SK-N-SH (cell line): ENCODE measurements at regions of chr17 and their contacts with region 1.

Region 1: DNA sequence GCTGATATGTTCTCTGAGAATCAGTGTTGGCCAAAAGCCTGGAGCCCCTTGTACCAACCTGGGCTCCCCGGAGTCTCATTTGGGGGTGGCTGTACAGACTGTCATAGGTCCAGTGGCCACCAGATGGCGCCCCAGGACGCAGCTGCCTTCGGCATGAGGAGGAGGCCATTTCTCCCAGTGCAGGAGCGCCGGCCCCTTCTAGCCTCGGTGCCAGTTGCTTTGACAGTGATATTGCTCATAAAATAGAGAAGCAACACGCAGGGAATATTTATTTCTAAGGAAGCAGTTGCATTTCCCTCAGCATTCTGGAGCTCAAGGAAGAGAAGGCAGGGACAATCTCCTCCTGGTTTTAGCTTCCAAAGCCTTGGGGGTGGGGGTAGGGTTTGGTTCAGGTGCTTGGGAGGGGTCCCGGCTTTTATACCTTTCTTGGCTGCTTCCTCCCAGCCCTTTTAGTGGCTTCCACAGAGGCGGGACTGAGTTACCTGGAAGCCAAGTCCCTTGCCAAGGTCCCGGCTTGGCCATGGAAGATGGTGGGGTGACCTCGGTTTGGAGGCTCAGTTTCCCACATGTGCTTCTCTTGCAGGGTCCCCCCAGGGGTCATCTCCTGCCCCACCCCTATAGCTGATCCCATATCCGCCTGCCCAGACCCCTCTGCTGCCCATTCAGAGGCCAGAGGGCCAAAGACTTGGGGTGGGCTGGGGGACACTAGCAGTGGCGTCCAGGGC is 117.8 kb upstream of the CDC42EP4 start:
- DNase-seq: peak; percentile 96
- H3K4me3 ChIP-seq: peak overlapping the region in 1 of 2 experiments; percentile 18; a peak in 1 of 4 replicates
- H3K27ac ChIP-seq: no peak overlapping the region
- H3K4me1 ChIP-seq: peaks cover 0 to 12% of the 10 kb centered on the region in 2 experiments; a peak in 1 of 4 replicates
- H3K27me3 ChIP-seq: no peaks in the 10 kb centered on the region
- CTCF ChIP-seq: peak; percentile 100
- EP300 ChIP-seq: peak in 1 of 2 experiments; percentile 24; a peak in 1 of 4 replicates
- RAD21 ChIP-seq: peak; percentile 100

Region 2: GRCh38 chr17:73068322-73069153 is 361.1 kb before region 1 on chr17:
- CTCF ChIA-PET with region 1: no interaction called
- POLR2A ChIA-PET with region 1: no interaction called
- DNase-seq: peak; percentile 59
- H3K4me3 ChIP-seq: no peak overlapping the region
- H3K27ac ChIP-seq: peak overlapping the region; percentile 83 to 86
- H3K4me1 ChIP-seq: peaks cover 17 to 35% of the 10 kb centered on the region in 2 experiments
- H3K27me3 ChIP-seq: no peaks in the 10 kb centered on the region
- CTCF ChIP-seq: no peak
- EP300 ChIP-seq: no peak
- RAD21 ChIP-seq: no peak

Region 3: DNA sequence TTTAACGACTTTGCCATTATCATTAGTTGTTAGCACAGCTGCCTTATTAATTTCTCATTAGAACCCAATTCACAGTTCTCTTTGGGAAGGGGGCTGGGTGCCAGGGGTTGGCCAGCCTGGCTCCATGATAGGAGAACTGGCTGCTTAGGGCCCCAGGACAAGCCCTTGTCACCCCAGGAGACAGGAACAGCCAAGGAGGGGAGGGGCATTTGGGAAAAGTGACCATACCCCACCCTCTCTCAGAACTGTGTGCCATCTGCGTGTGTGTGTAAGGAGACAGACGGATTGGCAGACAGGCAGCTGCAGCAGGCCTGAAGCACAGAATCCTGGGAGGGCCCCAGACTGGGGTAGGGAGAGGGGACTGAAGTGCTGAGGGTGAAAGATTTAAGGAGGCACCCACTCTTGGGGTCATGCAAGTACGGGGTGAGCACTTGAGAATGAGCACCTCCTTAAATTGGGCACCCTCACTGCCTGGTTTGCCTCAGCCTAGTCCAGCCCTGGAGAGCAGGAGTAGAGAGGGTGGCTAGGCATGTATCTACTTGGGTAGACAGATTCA is 36.2 kb after region 1 on chr17:
- CTCF ChIA-PET with region 1: interaction called, 14 read pairs
- POLR2A ChIA-PET with region 1: no interaction called
- DNase-seq: no peak
- H3K4me3 ChIP-seq: no peak overlapping the region
- H3K27ac ChIP-seq: no peak overlapping the region
- H3K4me1 ChIP-seq: peaks cover 0 to 10% of the 10 kb centered on the region in 2 experiments; a peak in 1 of 4 replicates
- H3K27me3 ChIP-seq: no peaks in the 10 kb centered on the region
- CTCF ChIP-seq: no peak
- EP300 ChIP-seq: no peak
- RAD21 ChIP-seq: no peak

Region 4: GRCh38 chr17:73541111-73541510 is 111.5 kb after region 1 on chr17:
- CTCF ChIA-PET with region 1: interaction called, 28 read pairs
- POLR2A ChIA-PET with region 1: no interaction called
- DNase-seq: no peak
- H3K4me3 ChIP-seq: no peak overlapping the region
- H3K27ac ChIP-seq: no peak overlapping the region
- H3K4me1 ChIP-seq: peaks cover 0 to 44% of the 10 kb centered on the region in 2 experiments; a peak in 1 of 4 replicates
- H3K27me3 ChIP-seq: no peaks in the 10 kb centered on the region
- CTCF ChIP-seq: no peak
- EP300 ChIP-seq: no peak
- RAD21 ChIP-seq: no peak

Region 5: GRCh38 chr17:73595479-73595878 is 165.9 kb after region 1 on chr17:
- CTCF ChIA-PET with region 1: interaction called, 83 read pairs
- POLR2A ChIA-PET with region 1: interaction called, 3 read pairs
- DNase-seq: peak; percentile 96
- H3K4me3 ChIP-seq: no peak overlapping the region
- H3K27ac ChIP-seq: no peak overlapping the region
- H3K4me1 ChIP-seq: peaks cover 0 to 36% of the 10 kb centered on the region in 2 experiments; a peak in 1 of 4 replicates
- H3K27me3 ChIP-seq: no peaks in the 10 kb centered on the region
- CTCF ChIP-seq: 0 out of 2 replicates have a peak, but pooled peaks have one; percentile 19
- EP300 ChIP-seq: peak in 1 of 2 experiments; percentile 81; a peak in 2 of 4 replicates
- RAD21 ChIP-seq: peak; percentile 82

Region 6: GRCh38 chr17:73710095-73710592 is 280.5 kb after region 1 on chr17:
- CTCF ChIA-PET with region 1: interaction called, 73 read pairs
- POLR2A ChIA-PET with region 1: no interaction called
- DNase-seq: peak; percentile 81
- H3K4me3 ChIP-seq: no peak overlapping the region; a peak in 1 of 4 replicates
- H3K27ac ChIP-seq: no peak overlapping the region
- H3K4me1 ChIP-seq: peaks cover 0 to 15% of the 10 kb centered on the region in 2 experiments; a peak in 2 of 4 replicates
- H3K27me3 ChIP-seq: no peaks in the 10 kb centered on the region
- CTCF ChIP-seq: peak; percentile 51
- EP300 ChIP-seq: no peak
- RAD21 ChIP-seq: peak; percentile 87

Region 7: DNA sequence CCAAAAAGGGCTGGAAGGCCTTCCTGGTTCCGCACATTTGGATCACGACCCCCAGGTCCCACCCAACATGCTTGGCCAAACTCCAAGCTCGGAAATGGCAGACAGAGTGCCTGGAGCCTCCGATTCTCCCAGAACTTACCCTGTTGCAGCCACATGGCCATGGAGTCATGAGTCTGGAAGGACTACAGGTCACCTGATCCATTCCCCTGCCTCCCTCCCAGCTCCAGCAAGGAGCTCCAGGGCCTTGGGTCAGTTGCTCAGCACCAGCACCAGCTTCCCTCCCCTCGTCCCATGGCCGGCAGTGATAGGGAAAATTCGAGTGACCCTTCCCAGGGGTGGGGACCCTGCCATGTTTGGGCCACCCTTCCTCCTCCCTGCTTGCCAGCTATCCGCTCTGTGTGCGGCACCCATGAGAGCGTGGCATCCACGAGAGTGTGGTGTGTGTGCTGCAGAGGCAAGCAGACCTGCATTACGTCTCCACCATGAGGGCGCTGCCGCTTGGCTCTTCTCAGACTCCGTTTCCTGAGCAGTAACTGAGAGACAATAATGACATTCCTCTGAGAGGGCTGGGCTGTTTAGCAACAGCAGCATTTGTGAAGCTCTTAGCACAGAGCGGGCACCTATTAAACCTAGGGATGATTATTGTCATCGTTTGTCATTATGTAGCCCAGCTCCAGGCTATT is 752.6 kb after region 1 on chr17:
- CTCF ChIA-PET with region 1: interaction called, 18 read pairs
- POLR2A ChIA-PET with region 1: no interaction called
- DNase-seq: no peak
- H3K4me3 ChIP-seq: no peak overlapping the region
- H3K27ac ChIP-seq: no peak overlapping the region
- H3K4me1 ChIP-seq: peaks cover 0 to 5% of the 10 kb centered on the region in 2 experiments; a peak in 1 of 4 replicates
- H3K27me3 ChIP-seq: no peaks in the 10 kb centered on the region
- CTCF ChIP-seq: no peak
- EP300 ChIP-seq: no peak
- RAD21 ChIP-seq: no peak